MCF 10A (cell line): ENCODE measurements at regions of chr10 and their contacts with region 1.

Region 1: GRCh38 chr10:84537447-84537931 is 209.1 kb downstream of the CCSER2 start:
- DNase-seq: peak; percentile 68
- H3K4me3 Mint-ChIP-seq: no peak overlapping the region
- H3K27ac Mint-ChIP-seq: no peak overlapping the region
- H3K4me1 Mint-ChIP-seq: peaks cover 25% of the 10 kb centered on the region
- H3K27me3 Mint-ChIP-seq: no peaks in the 10 kb centered on the region
- CTCF ChIP-seq: peak; percentile 70

Region 2: GRCh38 chr10:84264611-84265141 is 272.8 kb before region 1 on chr10:
- CTCF ChIA-PET with region 1: interaction called, 164 read pairs
- POLR2A ChIA-PET with region 1: no interaction called
- intact Hi-C with region 1: loop called (anchors 1 kb)
- DNase-seq: peak; percentile 65
- H3K4me3 Mint-ChIP-seq: no peak overlapping the region
- H3K27ac Mint-ChIP-seq: no peak overlapping the region
- H3K4me1 Mint-ChIP-seq: peaks cover 17% of the 10 kb centered on the region
- H3K27me3 Mint-ChIP-seq: peaks cover 14% of the 10 kb centered on the region
- CTCF ChIP-seq: peak; percentile 92

Region 3: GRCh38 chr10:84375011-84375410 is 162.5 kb before region 1 on chr10:
- CTCF ChIA-PET with region 1: interaction called, 188 read pairs
- POLR2A ChIA-PET with region 1: interaction called, 4 read pairs
- intact Hi-C with region 1: loop called (anchors 1 kb)
- DNase-seq: peak; percentile 70
- H3K4me3 Mint-ChIP-seq: no peak overlapping the region
- H3K27ac Mint-ChIP-seq: no peak overlapping the region
- H3K4me1 Mint-ChIP-seq: peaks cover 5% of the 10 kb centered on the region
- H3K27me3 Mint-ChIP-seq: no peaks in the 10 kb centered on the region
- CTCF ChIP-seq: peak; percentile 68

Region 4: GRCh38 chr10:84429926-84430520 is 107.5 kb before region 1 on chr10:
- CTCF ChIA-PET with region 1: interaction called, 43 read pairs
- POLR2A ChIA-PET with region 1: no interaction called
- intact Hi-C with region 1: loop called (anchors 1 kb)
- DNase-seq: peak; percentile 76
- H3K4me3 Mint-ChIP-seq: no peak overlapping the region
- H3K27ac Mint-ChIP-seq: no peak overlapping the region
- H3K4me1 Mint-ChIP-seq: peaks cover 24% of the 10 kb centered on the region
- H3K27me3 Mint-ChIP-seq: no peaks in the 10 kb centered on the region
- CTCF ChIP-seq: peak; percentile 63

Region 5: DNA sequence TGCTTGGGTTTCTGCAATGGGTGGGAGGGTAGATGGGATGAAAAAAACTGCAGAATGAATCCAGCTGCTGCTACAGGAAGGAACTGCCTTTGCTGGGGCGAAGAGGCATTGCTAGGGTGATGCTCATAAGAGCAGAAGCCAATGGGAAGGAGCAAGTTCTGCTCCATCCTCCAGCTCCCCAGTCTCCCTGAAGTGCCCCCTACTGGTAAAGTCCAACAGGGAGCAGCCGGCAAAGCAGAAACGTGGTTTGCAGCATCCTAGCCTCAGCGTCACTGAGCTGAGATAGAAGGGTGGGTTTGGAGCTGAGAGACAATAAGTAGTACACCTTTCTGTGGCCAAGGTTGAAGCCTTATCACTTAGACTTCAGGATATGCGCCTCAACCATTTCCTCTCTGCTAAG is 11.4 kb after region 1 on chr10:
- CTCF ChIA-PET with region 1: interaction called, 53 read pairs
- POLR2A ChIA-PET with region 1: no interaction called
- intact Hi-C with region 1: no loop called
- DNase-seq: no peak
- H3K4me3 Mint-ChIP-seq: no peak overlapping the region
- H3K27ac Mint-ChIP-seq: no peak overlapping the region
- H3K4me1 Mint-ChIP-seq: peaks cover 7% of the 10 kb centered on the region
- H3K27me3 Mint-ChIP-seq: no peaks in the 10 kb centered on the region
- CTCF ChIP-seq: no peak

Region 6: GRCh38 chr10:86376852-86377796 is 1839.6 kb after region 1 on chr10:
- CTCF ChIA-PET with region 1: interaction called, 6 read pairs
- POLR2A ChIA-PET with region 1: no interaction called
- intact Hi-C with region 1: loop called (anchors 2 kb)
- DNase-seq: peak; percentile 58
- H3K4me3 Mint-ChIP-seq: no peak overlapping the region
- H3K27ac Mint-ChIP-seq: no peak overlapping the region
- H3K4me1 Mint-ChIP-seq: no peaks in the 10 kb centered on the region
- H3K27me3 Mint-ChIP-seq: peaks cover 15% of the 10 kb centered on the region
- CTCF ChIP-seq: peak; percentile 98